OCI-LY7 (cell line): ENCODE measurements at regions of chr4 and their contacts with region 1.

Region 1: DNA sequence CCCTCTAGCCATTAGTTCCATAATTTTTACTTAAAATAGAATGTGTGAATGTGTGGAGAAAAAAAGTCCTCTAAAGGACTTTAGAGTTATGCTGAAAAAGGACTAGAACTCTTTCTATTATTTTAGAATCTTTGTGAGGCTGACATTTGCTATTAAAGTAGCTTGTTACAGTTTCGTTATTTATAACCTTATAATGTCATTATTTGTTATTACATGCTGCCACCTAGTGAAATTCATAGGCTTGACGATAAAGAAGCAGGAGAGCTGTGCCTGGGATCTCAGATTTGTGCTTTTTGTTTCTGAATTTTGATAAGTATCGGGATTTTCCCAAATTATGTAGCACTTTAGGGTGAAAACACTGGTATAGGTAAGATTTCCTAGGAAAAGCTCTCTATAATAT is 38.5 kb upstream of the TAPT1 start:
- DNase-seq: peak; percentile 76
- H3K4me3 ChIP-seq: no peak overlapping the region
- H3K27ac ChIP-seq: no peak overlapping the region
- H3K4me1 ChIP-seq: peaks cover 36% of the 10 kb centered on the region
- CTCF ChIP-seq: peak; percentile 93

Region 2: GRCh38 chr4:15479089-15479912 is 785.5 kb before region 1 on chr4:
- CTCF ChIA-PET with region 1: no interaction called
- POLR2A ChIA-PET with region 1: no interaction called
- intact Hi-C with region 1: loop called (anchors 5 kb)
- DNase-seq: peak; percentile 44
- H3K4me3 ChIP-seq: no peak overlapping the region
- H3K27ac ChIP-seq: no peak overlapping the region
- H3K4me1 ChIP-seq: no peaks in the 10 kb centered on the region
- CTCF ChIP-seq: peak; percentile 80

Region 3: DNA sequence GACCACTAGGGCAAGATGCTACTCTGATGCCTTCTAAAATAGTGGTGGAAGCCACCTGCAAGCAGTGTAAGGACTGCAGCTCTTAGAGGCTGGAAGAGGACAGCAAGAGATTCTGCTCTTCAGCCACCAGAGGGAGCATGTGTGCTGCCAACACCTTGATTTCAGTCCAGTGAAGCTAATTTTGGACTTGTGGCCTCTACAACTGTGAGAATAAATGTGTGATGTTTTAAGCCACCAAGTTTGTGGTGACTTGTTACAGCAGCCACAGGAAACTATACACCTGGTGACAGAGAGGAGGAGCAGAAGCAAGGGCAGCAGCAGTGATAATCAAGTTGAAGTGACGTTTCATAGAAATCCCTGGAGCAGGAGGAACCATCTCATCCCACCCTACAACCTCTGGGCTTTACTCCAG is 382.1 kb before region 1 on chr4:
- CTCF ChIA-PET with region 1: no interaction called
- POLR2A ChIA-PET with region 1: no interaction called
- intact Hi-C with region 1: loop called (anchors 5 kb)
- DNase-seq: peak; percentile 87
- H3K4me3 ChIP-seq: no peak overlapping the region
- H3K27ac ChIP-seq: no peak overlapping the region
- H3K4me1 ChIP-seq: peaks cover 3% of the 10 kb centered on the region
- CTCF ChIP-seq: peak; percentile 94

Region 4: GRCh38 chr4:16026160-16026761 is 238.5 kb before region 1 on chr4:
- CTCF ChIA-PET with region 1: no interaction called
- POLR2A ChIA-PET with region 1: interaction called, 5 read pairs
- intact Hi-C with region 1: loop called (anchors 1 kb)
- DNase-seq: peak; percentile 80
- H3K4me3 ChIP-seq: no peak overlapping the region
- H3K27ac ChIP-seq: no peak overlapping the region
- H3K4me1 ChIP-seq: no peaks in the 10 kb centered on the region
- CTCF ChIP-seq: peak; percentile 99

Region 5: DNA sequence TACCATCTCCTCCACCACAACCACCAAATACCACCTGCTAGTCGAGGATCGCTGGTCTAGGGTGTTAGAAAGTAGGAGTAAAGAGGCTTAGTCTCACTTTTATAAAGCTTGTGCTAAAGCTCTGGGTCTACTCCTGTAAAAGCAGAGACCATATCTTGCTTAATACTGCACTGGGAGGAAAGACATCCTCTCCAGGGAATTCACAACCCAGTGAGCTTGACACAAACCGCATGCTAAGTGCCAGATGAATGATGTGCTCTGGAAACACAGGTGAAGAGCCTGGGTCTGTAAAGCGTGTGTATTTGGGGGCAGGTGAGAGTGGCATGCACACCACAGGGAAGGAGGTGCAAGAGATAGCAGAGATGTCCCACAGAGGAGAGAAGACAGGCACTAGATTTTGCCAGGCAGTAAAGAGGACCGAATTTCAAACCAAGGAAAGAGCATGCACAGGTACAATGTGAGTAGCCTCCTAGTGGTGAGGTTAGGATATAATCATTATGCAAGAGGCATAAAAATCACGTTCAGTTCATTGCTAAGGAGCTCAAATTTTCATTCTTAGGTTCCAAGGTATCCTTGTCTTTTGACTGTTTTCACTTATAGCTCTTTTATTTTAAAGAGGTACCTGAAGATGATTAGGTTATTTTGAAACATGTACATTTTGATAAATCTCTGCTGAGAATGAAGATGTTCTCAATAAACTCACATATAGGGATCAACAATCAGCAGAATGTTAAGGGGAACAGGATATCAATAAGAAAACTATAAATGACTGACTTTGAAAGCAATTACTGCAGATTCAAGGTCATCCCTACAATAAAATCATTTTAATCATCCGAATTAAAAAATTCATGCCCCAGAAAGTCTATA is 59.3 kb before region 1 on chr4:
- CTCF ChIA-PET with region 1: no interaction called
- POLR2A ChIA-PET with region 1: interaction called, 4 read pairs
- intact Hi-C with region 1: loop called (anchors 2 kb)
- DNase-seq: peak; percentile 86
- H3K4me3 ChIP-seq: peak overlapping the region; percentile 18
- H3K27ac ChIP-seq: peak overlapping the region; percentile 39
- H3K4me1 ChIP-seq: peaks cover 21% of the 10 kb centered on the region
- CTCF ChIP-seq: peak; percentile 84

Region 6: DNA sequence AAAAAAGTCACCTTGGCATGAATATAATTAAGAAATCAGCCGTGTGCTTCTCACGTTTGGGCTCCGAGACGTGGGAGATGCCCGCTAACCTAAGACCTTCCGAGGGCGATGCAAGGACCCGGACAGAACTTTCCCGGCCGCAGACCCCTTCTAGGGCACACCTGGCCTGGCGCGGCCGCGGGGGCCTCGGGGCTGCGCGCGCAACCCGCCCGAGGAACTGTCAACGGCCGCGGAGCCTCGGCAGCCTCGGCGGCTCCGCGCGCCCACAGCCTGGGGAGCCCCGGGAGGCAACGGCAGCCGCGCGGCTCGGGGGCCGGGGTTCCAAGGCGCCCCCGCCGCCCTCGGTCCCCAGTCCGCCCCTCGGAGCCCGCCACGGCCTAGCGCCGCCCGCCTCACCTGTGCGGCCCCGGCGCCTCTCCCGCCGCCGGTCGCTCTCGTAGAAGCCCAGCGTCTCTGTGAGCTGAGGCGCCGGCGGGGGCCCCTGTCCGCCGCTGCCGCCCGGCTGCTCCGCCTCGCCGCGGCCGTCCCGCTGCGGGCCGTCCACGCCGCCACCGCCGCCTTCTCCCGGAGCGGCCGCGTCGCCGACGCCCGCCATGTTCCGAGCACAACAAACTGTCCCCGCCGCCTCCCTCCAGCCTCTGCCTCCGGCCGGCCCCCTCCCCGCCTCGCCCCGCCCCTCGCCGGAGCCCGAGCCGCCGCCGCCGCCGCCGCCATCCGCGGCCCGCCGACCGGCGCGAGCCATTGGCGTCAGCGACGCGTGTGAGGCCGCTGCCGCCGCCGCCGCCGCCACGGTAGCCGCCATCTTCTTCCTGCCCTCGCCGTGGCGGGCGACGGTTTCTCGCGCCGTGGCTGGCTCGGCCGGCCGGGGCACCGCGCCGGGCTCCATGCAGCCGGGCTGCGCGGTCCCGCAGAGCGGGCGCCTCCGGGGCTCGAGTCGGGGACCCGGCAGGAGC is 38.7 kb before region 1 on chr4 and contains the start of gene TAPT1:
- CTCF ChIA-PET with region 1: no interaction called
- POLR2A ChIA-PET with region 1: no interaction called
- intact Hi-C with region 1: loop called (anchors 1 kb)
- DNase-seq: peak; percentile 81
- H3K4me3 ChIP-seq: peak within 1 kb of the TSS; percentile 71
- H3K27ac ChIP-seq: peak within 1 kb of the TSS; percentile 77
- H3K4me1 ChIP-seq: peaks cover 63% of the 10 kb centered on the region
- CTCF ChIP-seq: no peak
- total RNA-seq, gene TAPT1: 23.2 and 34.3 TPM in 2 replicates

Region 7: GRCh38 chr4:16235209-16235608 is 29.6 kb before region 1 on chr4:
- CTCF ChIA-PET with region 1: no interaction called
- POLR2A ChIA-PET with region 1: interaction called, 13 read pairs
- intact Hi-C with region 1: no loop called
- DNase-seq: no peak
- H3K4me3 ChIP-seq: no peak overlapping the region
- H3K27ac ChIP-seq: no peak overlapping the region
- H3K4me1 ChIP-seq: peaks cover 68% of the 10 kb centered on the region
- CTCF ChIP-seq: no peak

Region 8: DNA sequence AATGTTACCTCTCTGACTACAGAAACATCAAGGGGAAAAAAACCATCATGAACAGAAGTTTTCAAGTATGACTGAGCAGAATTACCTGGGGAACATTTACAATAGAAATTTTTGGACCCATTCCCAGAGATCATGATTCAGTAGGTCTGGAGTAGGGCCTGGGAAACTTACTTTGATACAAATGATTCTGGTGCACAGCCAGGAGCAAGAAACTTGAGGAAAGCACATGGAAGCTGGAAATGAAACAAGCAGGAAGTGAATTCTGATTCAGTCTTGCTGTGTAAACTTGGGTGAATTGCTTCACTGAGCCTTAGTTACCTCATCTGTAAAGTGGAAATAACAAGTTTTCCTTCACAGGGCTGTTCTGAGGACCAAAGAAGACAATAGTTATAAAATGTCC is 154.0 kb after region 1 on chr4:
- CTCF ChIA-PET with region 1: no interaction called
- POLR2A ChIA-PET with region 1: no interaction called
- intact Hi-C with region 1: no loop called
- DNase-seq: no peak
- H3K4me3 ChIP-seq: no peak overlapping the region
- H3K27ac ChIP-seq: no peak overlapping the region
- H3K4me1 ChIP-seq: no peaks in the 10 kb centered on the region
- CTCF ChIP-seq: no peak